PC-9 (cell line): ENCODE measurements at regions of chr1 and their contacts with region 1.

Region 1: DNA sequence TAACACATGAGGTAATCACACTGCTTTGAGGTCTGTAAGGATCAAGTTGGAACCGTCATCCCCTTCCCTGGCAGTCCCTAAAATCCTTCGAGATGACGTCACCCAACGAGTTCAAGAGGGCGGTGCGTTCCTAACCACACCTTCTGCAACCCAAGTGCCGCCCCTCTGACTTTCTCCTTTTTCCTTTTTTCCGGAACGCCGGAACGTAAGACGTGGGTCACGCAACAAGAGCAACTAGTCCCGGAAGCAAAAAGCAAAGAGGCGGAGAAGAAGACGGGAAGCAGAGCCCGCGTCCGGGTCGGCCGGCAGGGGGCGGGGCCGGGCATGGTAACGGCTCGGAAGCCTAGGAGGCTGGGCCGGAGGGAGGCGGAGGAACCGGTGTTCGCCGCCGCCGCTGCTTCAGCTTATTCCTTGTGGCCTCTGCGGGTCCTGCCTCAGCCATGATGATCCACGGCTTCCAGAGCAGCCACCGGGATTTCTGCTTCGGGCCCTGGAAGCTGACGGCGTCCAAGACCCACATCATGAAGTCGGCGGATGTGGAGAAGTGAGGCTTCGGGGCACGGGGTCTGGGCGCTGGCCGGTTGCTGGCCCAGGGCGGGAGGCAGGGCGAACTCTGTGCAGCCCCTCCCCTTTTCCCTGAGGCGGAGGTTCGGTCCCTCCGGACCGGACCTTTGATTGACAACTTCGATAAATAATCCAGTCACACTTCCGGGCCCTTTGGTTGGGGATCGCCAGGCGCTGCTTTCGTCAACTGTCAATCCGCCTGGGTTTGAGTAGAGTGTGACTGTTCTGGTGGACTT is at the start of gene TIPRL:
- DNase-seq: peak; percentile 95 to 96
- H3K4me3 ChIP-seq: peak within 1 kb of the TSS; percentile 87
- H3K27ac ChIP-seq: peak within 1 kb of the TSS; percentile 65
- H3K4me1 ChIP-seq: peaks cover 45% of the 10 kb centered on the region
- H3K27me3 ChIP-seq: no peaks in the 10 kb centered on the region
- CTCF ChIP-seq: peak; percentile 72
- total RNA-seq, gene TIPRL: 34.1 and 47.7 TPM in 2 replicates

Region 2: DNA sequence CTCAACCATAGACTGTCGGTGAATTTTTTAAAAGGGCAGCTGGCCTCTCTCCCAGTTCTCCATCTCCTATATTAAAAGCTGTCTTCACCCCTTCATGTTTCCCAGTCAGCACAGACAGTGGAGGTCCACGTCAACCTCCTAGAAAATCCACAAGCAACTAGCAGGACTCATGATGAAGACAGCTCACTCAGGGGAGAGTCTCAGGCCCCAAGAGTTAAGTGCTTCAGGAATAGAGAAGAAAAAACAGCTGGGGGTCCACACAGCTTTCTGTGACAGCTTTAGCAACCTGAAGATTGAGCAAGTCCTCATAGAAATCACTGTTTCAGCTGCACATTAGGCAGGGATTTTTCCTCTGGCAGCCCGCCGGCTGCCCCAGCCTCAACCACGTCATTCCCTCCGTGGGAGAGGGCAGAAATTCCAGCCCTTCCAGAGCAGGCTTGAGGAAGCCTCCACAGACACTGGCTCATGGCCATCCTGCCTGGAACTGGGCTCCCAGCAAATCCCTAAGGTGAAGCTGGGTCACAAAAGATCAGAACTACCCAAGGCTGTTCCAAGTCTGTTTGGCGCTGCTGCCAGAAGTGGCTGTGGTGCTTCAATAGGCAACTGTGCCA is 57.3 kb before region 1 on chr1:
- CTCF ChIA-PET with region 1: no interaction called
- POLR2A ChIA-PET with region 1: interaction called, 14 read pairs
- intact Hi-C with region 1: no loop called
- DNase-seq: no peak
- H3K4me3 ChIP-seq: no peak overlapping the region
- H3K27ac ChIP-seq: no peak overlapping the region
- H3K4me1 ChIP-seq: 0 out of 2 replicates have a peak, but pooled peaks cover 2% of the 10 kb centered on the region
- H3K27me3 ChIP-seq: no peaks in the 10 kb centered on the region
- CTCF ChIP-seq: no peak

Region 3: GRCh38 chr1:168225476-168226190 is 46.8 kb after region 1 on chr1 and contains the start of gene SFT2D2:
- CTCF ChIA-PET with region 1: no interaction called
- POLR2A ChIA-PET with region 1: no interaction called
- intact Hi-C with region 1: loop called (anchors 2 kb)
- DNase-seq: peak; percentile 63 to 78
- H3K4me3 ChIP-seq: peak within 1 kb of the TSS; percentile 88
- H3K27ac ChIP-seq: peak within 1 kb of the TSS; percentile 70
- H3K4me1 ChIP-seq: peaks cover 63% of the 10 kb centered on the region
- H3K27me3 ChIP-seq: no peaks in the 10 kb centered on the region
- CTCF ChIP-seq: no peak
- total RNA-seq, gene SFT2D2: 54.4 and 66.8 TPM in 2 replicates

Region 4: DNA sequence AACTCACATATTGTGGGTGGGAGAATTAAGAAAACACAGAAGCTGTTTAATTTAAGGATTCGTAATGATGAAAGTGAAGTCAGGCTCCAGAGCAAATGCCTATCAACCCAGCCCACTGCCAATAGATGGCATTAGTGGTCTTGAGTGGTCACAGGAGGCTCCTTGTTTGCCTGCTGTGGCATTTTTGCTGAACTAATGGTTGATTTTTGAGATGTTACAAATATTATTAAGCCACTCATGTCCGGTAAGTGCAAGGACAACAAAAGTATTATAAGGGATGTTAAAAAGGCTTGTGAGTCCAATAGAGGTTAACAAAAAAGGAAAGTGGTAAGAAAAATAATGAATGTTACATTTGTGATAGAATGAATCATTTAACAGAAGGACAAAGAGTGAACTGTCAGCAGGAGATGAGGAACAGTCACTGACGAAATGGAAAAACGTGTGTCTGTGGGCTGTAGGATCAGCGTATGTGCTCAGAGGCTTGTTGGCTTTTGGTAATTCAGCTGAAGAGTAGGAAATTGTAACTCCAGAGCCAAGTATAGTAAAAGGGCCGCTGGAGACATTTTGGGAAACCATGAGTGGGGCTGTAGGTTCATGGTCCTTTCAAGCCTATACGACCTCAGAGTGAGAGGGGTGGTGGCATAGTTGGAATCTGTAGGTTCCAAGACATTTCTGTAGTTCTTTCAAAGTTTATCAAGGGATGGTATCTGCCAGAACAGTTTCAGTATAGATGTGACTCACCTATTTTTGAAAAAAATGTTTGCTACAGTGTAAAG is 58.2 kb after region 1 on chr1:
- CTCF ChIA-PET with region 1: no interaction called
- POLR2A ChIA-PET with region 1: no interaction called
- intact Hi-C with region 1: no loop called
- DNase-seq: no peak
- H3K4me3 ChIP-seq: no peak overlapping the region
- H3K27ac ChIP-seq: no peak overlapping the region
- H3K4me1 ChIP-seq: 0 out of 2 replicates have a peak, but pooled peaks cover 8% of the 10 kb centered on the region
- H3K27me3 ChIP-seq: no peaks in the 10 kb centered on the region
- CTCF ChIP-seq: no peak

Region 5: GRCh38 chr1:169106095-169106920 is 927.5 kb after region 1 on chr1 and contains the start of gene ATP1B1:
- CTCF ChIA-PET with region 1: no interaction called
- POLR2A ChIA-PET with region 1: no interaction called
- intact Hi-C with region 1: no loop called
- DNase-seq: peak; percentile 74 to 95
- H3K4me3 ChIP-seq: peak within 1 kb of the TSS; percentile 99
- H3K27ac ChIP-seq: peak within 1 kb of the TSS; percentile 83
- H3K4me1 ChIP-seq: peaks cover 48% of the 10 kb centered on the region
- H3K27me3 ChIP-seq: no peaks in the 10 kb centered on the region
- CTCF ChIP-seq: peak; percentile 72
- total RNA-seq, gene ATP1B1: 110 and 113 TPM in 2 replicates